ENCODE measurements at regions of chr7 and their contacts with region 1.

Region 1: DNA sequence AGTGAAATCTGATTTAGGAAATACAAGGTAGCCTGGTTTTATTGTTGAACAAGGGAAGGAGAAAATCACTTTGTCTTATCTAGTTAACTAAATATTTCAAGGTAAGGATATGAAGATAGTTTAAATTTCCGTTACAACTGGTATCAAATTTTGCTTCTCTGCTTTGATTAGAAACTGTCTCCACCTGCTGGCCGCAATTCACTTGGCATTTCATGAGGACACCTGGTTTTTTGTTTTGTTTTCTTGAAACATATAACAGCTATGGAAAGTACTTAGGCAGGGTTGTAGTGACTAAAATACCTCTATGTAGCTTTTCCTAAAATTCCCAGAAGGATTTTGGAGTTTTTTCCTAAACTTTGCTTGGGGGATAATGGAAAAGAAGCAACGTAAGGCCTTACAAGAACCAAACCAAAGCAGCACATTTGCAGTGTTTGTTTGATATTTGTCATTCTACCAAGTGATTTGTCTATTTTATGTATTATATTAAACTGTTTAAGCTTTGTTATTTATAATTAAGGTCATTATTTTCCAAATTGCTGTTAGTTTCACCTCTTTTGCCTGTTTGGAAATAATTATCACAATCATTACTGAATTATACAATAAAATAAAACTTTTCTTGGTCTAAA is 73.6 kb downstream of the AHCYL2 start:
- DNase-seq: no peak
- ATAC-seq: no peak
- H3K4me3 Mint-ChIP-seq: no peak overlapping the region
- H3K27ac Mint-ChIP-seq: no peak overlapping the region
- H3K4me1 Mint-ChIP-seq: no peaks in the 10 kb centered on the region
- H3K27me3 Mint-ChIP-seq: no peaks in the 10 kb centered on the region
- CTCF ChIP-seq: peak; percentile 64

Region 2: GRCh38 chr7:129258649-129259389 is 39.6 kb before region 1 on chr7:
- CTCF ChIA-PET with region 1: no interaction called
- POLR2A ChIA-PET with region 1: no interaction called
- intact Hi-C with region 1: loop called (anchors 5 kb)
- DNase-seq: no peak
- ATAC-seq: no peak
- H3K4me3 Mint-ChIP-seq: no peak overlapping the region
- H3K27ac Mint-ChIP-seq: no peak overlapping the region
- H3K4me1 Mint-ChIP-seq: peaks cover 26% of the 10 kb centered on the region
- H3K27me3 Mint-ChIP-seq: no peaks in the 10 kb centered on the region
- CTCF ChIP-seq: no peak

Region 3: DNA sequence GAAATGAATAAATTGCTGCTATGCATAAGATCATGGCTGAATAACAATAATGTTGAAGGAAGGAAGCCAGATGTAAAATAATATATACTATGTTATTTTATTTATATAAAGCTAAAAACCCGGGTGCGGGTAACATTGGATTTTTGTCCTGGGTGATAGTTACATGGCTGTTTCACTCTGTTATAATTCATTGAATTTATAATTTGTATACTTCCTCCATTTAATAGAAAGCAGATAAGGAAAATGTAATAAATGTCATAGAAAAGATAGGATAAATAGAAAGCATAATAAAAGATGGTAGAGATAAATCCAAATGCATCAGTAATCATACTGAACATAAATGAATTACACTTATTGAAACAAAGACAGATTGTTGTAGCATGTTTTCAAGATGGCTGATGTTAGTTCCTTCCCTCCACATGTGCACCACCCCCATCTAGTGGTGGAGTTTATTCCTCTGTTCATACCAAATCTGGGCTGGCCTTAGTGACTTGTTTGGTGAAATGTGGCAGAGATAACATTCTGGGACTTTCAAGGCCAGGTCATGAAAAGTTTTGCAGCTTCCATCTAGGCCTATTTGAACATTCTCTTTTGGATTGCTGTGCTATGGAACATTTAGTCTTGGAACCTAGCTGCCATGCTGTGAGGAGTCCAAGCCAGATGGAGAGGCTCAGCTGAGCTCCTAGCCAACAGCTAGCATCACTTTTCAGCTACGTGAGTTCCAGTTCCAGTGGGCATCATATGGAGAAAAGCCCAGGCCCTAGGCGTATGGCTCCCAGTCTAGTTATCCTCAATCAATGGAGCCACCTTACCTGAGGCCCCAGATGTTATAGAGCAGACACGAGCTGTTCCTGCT is 26.7 kb before region 1 on chr7:
- CTCF ChIA-PET with region 1: interaction called, 9 read pairs
- POLR2A ChIA-PET with region 1: no interaction called
- intact Hi-C with region 1: loop called (anchors 1 kb)
- DNase-seq: no peak
- ATAC-seq: peak; percentile 83
- H3K4me3 Mint-ChIP-seq: peak overlapping the region; percentile 69
- H3K27ac Mint-ChIP-seq: peak overlapping the region; percentile 69
- H3K4me1 Mint-ChIP-seq: peaks cover 21% of the 10 kb centered on the region
- H3K27me3 Mint-ChIP-seq: no peaks in the 10 kb centered on the region
- CTCF ChIP-seq: peak; percentile 28